ENCODE measurements at regions of chr19 and their contacts with region 1.

Region 1: DNA sequence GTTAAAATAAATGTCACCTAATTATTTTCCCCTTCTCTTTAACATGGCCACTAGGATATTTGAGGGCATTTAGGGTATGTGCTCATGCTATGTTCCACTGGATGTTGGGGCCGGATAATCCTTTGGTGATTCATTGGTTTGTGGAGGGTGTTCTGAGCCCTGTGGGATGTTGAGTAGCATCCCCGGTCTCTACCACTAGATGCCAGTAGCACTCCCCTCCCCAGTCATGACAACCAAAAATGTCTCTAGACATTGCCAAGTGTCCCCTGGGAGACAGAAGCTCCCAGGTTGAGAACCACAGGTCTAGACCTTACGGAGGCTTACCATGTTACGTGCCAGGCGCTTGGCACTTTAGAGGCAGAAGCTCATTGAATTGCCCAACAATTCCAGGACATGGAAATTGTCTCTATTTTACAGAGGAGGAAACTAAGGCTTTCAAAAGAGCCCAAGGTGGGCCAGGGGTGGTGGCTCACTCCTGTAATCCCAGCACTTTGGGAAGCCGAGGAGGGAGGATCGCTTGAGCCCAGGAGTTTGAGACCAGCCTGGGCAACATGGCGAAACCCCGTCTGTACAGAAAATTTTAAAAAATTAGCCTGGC is 14.1 kb downstream of the SHANK1 start:
- DNase-seq: peak in 5 of 14 experiments; percentile 8 to 54 (median 34)
- ATAC-seq: peak; percentile 71
- H3K4me3 ChIP-seq: no peak overlapping the region
- H3K4me3 Mint-ChIP-seq: no peak overlapping the region
- H3K27ac ChIP-seq: no peak overlapping the region
- H3K27ac Mint-ChIP-seq: no peak overlapping the region
- H3K4me1 ChIP-seq: no peaks in the 10 kb centered on the region
- H3K4me1 Mint-ChIP-seq: no peaks in the 10 kb centered on the region
- H3K27me3 ChIP-seq: peaks cover 8 to 33% of the 10 kb centered on the region in 2 experiments
- H3K27me3 Mint-ChIP-seq: peaks cover 54% of the 10 kb centered on the region
- CTCF ChIP-seq: peak; percentile 42

Region 2: DNA sequence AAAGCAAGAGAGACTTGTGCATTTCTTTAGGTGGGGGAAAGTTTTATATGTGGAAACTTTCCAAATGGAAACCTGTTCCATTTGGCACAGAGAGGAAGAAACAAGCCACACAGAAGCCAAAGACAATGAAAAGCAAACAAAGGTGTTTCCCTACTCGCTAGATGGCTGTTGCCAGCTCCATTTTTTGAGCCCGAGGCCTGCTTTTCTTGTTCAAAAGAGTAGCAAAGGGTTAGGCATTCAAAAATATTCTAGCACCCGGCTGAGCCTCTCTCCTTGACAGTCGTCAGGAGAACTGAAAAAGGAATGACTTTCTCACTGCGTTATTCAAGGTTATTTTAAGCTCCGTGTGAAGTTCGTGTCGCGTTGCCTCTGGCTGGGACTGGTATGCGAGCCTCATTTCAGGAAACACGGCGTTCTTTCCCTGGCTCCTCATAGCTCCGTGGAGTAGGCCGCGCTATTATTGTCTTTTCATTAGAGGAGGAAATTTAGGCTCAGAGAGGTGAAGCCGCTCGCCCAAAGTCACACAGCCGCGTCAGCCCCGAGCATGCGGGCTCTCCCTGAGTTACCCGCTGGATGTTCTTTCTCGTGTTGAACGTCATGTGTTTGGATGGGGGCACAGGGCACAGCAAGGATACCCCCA is 1540.3 kb before region 1 on chr19:
- CTCF ChIA-PET with region 1: no interaction called
- POLR2A ChIA-PET with region 1: no interaction called
- intact Hi-C with region 1: loop called in 1 of 2 experiments (anchors 5 kb)
- DNase-seq: no peak
- ATAC-seq: no peak
- H3K4me3 ChIP-seq: no peak overlapping the region
- H3K4me3 Mint-ChIP-seq: no peak overlapping the region
- H3K27ac ChIP-seq: no peak overlapping the region
- H3K27ac Mint-ChIP-seq: no peak overlapping the region
- H3K4me1 ChIP-seq: no peaks in the 10 kb centered on the region
- H3K4me1 Mint-ChIP-seq: no peaks in the 10 kb centered on the region
- H3K27me3 ChIP-seq: peaks cover 0 to 4% of the 10 kb centered on the region in 2 experiments
- H3K27me3 Mint-ChIP-seq: peaks cover 26% of the 10 kb centered on the region
- CTCF ChIP-seq: no peak

Region 3: GRCh38 chr19:50739914-50740426 is 34.4 kb after region 1 on chr19:
- CTCF ChIA-PET with region 1: no interaction called
- POLR2A ChIA-PET with region 1: no interaction called
- intact Hi-C with region 1: no loop called
- DNase-seq: no peak
- ATAC-seq: no peak
- H3K4me3 ChIP-seq: no peak overlapping the region
- H3K4me3 Mint-ChIP-seq: no peak overlapping the region
- H3K27ac ChIP-seq: no peak overlapping the region
- H3K27ac Mint-ChIP-seq: no peak overlapping the region
- H3K4me1 ChIP-seq: no peaks in the 10 kb centered on the region
- H3K4me1 Mint-ChIP-seq: no peaks in the 10 kb centered on the region
- H3K27me3 ChIP-seq: peaks cover 15 to 19% of the 10 kb centered on the region in 2 experiments
- H3K27me3 Mint-ChIP-seq: peaks cover 62% of the 10 kb centered on the region
- CTCF ChIP-seq: no peak

Region 4: GRCh38 chr19:50794439-50795237 is 89.1 kb after region 1 on chr19:
- CTCF ChIA-PET with region 1: no interaction called
- POLR2A ChIA-PET with region 1: no interaction called
- intact Hi-C with region 1: no loop called
- DNase-seq: peak in 2 of 14 experiments; percentile 32 to 52
- ATAC-seq: no peak
- H3K4me3 ChIP-seq: no peak overlapping the region
- H3K4me3 Mint-ChIP-seq: no peak overlapping the region
- H3K27ac ChIP-seq: no peak overlapping the region
- H3K27ac Mint-ChIP-seq: peak overlapping the region; percentile 33
- H3K4me1 ChIP-seq: peaks cover 15% of the 10 kb centered on the region
- H3K4me1 Mint-ChIP-seq: peaks cover 5% of the 10 kb centered on the region
- H3K27me3 ChIP-seq: no peaks in the 10 kb centered on the region
- H3K27me3 Mint-ChIP-seq: no peaks in the 10 kb centered on the region
- CTCF ChIP-seq: no peak